Activated CD4-positive, alpha-beta memory T cell treated with anti-CD3 and anti-CD28 coated beads for 36 hours (primary cell): ENCODE measurements at regions of chr15 and their contacts with region 1.

Region 1: DNA sequence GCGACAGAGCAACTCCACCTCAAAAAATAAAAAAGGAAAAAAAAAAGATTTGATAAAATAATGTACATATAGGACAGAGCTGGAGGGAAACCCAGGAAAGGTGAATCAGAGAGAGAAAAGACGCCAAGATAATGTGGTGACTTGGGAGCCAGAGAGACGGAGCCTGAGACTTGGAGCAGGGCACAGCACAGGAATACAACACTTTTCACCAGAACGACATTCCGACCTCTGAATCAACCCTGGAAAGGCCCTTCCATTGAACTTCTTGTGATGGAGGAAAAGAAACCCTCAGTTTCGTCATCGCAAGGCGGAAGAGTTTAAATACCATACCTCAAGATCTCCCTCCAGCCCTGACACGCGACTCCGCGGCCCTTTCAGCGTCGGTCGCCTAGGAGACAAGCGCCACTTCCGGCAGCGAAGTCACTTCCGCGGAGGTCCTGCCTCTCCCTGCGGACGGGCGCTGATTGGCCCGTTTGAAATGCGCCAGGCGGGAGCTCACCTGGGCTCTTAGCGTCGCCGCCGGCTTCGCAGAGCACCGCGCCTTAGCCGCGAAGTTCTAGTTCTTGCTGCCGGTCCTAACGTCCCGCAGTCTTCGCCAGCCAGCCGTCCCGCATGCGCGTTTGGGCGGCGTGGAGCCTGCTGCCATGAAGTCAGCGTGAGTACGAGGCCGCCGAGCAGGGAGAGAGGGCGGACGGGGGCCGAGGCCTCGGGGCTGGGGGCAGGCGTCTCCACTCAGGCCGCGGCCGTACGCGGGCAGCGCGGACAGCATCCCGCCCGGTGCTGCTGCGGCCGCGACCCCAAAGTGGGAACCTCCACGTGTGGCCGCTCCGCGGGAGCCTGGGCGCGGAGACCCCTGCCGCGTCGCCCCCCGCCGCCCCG is at the start of gene KIF23:
- DNase-seq: peak; percentile 95
- H3K4me3 Mint-ChIP-seq: peak within 1 kb of the TSS; percentile 82
- H3K27ac Mint-ChIP-seq: peak within 1 kb of the TSS; percentile 20
- H3K4me1 Mint-ChIP-seq: peaks cover 13% of the 10 kb centered on the region
- H3K27me3 Mint-ChIP-seq: peaks cover 14% of the 10 kb centered on the region
- total RNA-seq, gene KIF23: 55.6 to 63.1 TPM

Region 2: GRCh38 chr15:69160141-69160993 is 253.7 kb before region 1 on chr15 and contains the start of gene GLCE:
- CTCF ChIA-PET with region 1: interaction called, 3 read pairs
- POLR2A ChIA-PET with region 1: no interaction called
- intact Hi-C with region 1: loop called (anchors 1 kb)
- DNase-seq: peak; percentile 95
- H3K4me3 Mint-ChIP-seq: peak within 1 kb of the TSS; percentile 81
- H3K27ac Mint-ChIP-seq: peak within 1 kb of the TSS; percentile 24
- H3K4me1 Mint-ChIP-seq: peaks cover 14% of the 10 kb centered on the region
- H3K27me3 Mint-ChIP-seq: peaks cover 5% of the 10 kb centered on the region
- total RNA-seq, gene GLCE: 3.9 to 4.4 TPM

Region 3: DNA sequence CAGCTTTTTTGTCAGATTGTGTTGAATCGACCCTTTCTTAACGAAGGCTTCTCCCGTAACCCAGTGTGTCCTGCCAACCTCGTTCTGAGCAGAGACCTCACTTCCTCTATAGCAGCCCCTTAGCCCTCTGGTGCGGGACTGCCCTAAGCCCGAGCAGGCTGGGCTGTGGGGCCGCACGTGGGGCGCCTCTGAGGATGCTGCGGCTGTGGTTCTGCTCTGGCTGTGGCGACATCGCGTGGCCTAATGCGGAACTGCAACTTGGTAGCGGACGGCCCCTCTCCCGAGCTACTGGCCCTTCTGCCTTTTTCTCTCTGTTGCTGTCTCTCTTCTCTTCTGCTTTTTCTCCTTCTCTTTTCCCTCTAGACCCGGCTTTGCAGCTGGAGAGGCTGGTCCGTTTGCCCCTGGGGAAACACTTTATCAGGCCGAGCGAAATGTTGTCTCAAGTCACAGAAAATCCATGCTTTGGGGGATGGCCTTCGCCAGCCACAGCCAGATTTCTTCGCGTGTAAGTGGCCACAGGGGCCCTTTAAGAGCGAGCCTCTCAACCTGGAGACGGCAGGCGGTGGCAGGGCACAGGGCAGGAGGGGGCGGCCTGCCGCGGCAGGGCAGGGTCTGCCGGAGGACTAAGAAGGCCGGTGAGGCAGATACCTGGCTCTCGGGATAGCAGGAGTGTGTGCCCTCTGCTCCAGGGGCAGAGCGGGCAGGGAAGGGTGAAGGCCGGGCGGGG is 19.3 kb before region 1 on chr15:
- CTCF ChIA-PET with region 1: interaction called, 15 read pairs
- POLR2A ChIA-PET with region 1: no interaction called
- intact Hi-C with region 1: no loop called
- DNase-seq: peak; percentile 88
- H3K4me3 Mint-ChIP-seq: no peak overlapping the region
- H3K27ac Mint-ChIP-seq: no peak overlapping the region
- H3K4me1 Mint-ChIP-seq: peaks cover 7% of the 10 kb centered on the region
- H3K27me3 Mint-ChIP-seq: peaks cover 2% of the 10 kb centered on the region

Region 4: GRCh38 chr15:69443032-69443611 is 29.1 kb after region 1 on chr15:
- CTCF ChIA-PET with region 1: no interaction called
- POLR2A ChIA-PET with region 1: no interaction called
- intact Hi-C with region 1: loop called (anchors 1 kb)
- DNase-seq: no peak
- H3K4me3 Mint-ChIP-seq: no peak overlapping the region
- H3K27ac Mint-ChIP-seq: peak overlapping the region; percentile 73
- H3K4me1 Mint-ChIP-seq: peaks cover 17% of the 10 kb centered on the region
- H3K27me3 Mint-ChIP-seq: no peaks in the 10 kb centered on the region

Region 5: DNA sequence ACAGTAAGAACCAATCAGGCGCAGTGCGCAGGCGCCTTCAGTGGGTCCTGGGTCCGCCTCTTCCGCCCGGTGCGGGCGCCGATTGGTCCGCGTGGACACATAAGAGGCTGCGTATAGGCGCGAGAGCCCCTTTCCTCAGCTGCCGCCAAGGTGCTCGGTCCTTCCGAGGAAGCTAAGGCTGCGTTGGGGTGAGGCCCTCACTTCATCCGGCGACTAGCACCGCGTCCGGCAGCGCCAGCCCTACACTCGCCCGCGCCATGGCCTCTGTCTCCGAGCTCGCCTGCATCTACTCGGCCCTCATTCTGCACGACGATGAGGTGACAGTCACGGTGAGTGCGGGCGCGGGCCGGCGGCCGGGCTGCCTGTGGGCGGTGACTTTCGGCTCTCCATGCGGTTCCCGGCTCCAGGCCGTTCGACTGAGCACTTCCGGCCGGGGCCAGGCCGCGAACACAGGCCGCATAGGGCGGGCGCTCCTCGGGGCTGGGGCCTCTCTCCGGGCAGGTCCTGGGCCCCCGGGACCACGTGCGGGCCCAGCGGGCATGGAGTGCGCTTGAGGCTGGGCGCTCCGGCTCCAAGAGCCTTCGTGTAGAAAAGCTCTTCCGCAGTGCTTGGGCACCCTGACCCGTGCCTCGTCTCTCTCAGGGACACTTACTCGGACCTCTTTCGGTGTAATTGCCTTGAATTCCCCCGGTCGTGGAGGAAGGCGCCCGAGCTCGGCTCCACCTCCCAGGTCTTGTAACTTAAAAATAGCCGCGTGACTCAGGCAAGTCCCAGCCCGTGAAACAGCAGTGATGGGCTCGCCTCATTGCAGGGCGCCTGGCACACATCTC is 38.8 kb after region 1 on chr15 and contains the start of gene RPLP1:
- CTCF ChIA-PET with region 1: interaction called, 3 read pairs
- POLR2A ChIA-PET with region 1: interaction called, 28 read pairs
- intact Hi-C with region 1: loop called (anchors 1 kb)
- DNase-seq: peak; percentile 97
- H3K4me3 Mint-ChIP-seq: peak within 1 kb of the TSS; percentile 93
- H3K27ac Mint-ChIP-seq: peak within 1 kb of the TSS; percentile 95
- H3K4me1 Mint-ChIP-seq: peaks cover 23% of the 10 kb centered on the region
- H3K27me3 Mint-ChIP-seq: no peaks in the 10 kb centered on the region
- total RNA-seq, gene RPLP1: 2,547 to 2,620 TPM